ENCODE measurements at regions of chr15 and their contacts with region 1.

Region 1: DNA sequence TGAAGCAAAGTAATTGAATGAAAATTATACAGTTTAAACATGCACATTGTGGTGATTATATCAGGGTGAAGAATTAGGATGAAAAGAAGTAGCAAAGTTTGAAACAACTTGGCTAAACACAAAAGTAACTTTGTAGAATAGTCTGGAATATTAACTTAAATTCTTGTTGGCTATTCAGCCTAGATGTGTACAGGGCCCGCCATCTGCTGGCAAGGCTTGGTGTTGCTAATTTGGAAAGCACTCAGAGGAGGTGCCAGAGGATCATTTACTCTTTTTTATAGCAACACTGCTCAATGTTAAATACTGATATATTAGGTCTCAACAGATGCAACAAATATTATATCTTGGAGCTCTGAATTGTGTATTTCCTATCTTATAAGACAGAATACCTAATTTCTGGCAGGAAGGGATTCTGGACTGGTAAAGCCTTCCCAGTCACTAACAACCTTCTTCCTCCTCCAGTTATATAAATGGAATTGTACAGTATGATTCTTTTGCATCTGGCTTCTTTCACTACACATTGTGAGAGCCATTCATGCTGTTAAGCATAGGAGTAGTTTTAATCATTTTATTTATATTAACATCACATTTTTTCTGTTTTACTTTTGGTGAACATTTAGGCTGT is 36.1 kb downstream of the TTC23 start:
- DNase-seq: peak; percentile 90

Region 2: DNA sequence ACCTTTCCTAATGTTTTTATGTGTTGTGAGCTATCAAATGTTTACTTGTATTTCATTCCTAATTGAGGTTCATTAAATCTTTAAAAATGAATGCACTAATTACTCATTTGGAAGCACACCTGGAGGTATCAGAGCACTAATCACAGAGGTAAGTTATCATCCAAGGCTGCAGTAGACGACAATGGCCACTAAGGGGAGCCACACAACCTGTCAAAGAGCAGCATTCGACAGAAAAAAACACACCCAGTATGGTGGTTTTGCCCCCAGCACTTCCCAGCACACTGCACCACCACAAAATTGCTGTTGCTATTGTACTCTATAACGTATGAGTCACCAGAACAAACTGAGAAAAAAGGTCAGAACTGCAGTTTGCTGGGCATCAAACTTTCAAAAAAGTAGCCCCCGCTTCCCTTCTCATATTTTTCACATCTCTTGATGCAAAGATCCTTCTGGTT is 770.9 kb before region 1 on chr15:
- intact Hi-C with region 1: loop called (anchors 5 kb)
- DNase-seq: no peak

Region 3: GRCh38 chr15:98700519-98700918 is 512.8 kb before region 1 on chr15:
- intact Hi-C with region 1: no loop called
- DNase-seq: no peak

Region 4: DNA sequence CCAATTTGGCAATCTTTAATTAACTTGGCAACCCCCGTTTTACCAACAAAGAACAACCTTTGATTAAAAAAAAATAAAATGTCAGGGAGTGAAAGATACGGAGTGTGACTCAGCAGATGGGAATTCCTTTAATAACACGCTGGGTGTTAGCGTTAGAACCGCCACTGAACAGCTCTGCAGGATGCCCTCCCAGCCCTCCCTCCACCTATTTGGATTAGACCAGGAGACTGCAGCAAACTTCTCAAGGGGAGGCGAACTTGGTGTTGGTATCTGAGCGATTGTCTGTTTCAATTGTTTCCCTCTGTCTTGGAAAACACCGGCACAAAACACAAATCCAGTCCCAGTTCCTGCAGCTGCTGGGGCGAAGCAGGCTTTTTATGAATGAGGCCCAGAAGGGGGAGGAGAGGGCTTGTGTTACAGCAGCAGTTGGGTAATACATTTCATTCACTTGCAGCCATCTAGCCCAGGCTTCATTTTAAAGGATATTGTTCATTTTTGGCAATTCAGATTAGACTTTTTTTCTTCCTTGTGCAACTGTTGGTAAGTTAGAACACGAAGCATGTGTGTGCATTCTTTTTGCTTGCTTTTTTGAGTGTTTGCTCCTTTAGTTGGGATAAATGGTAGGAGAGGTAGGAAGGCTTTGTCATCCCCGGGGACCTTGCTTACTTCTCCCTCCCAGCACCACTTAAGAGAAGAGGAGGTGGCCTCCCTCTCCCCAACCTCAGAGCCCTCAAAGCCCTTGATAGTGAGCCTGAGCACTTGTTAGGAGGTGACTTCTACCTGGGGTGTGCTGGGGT is 412.7 kb before region 1 on chr15:
- intact Hi-C with region 1: no loop called
- DNase-seq: no peak

Region 5: GRCh38 chr15:99169769-99170311 is 43.5 kb before region 1 on chr15:
- intact Hi-C with region 1: loop called (anchors 2 kb)
- DNase-seq: no peak

Region 6: DNA sequence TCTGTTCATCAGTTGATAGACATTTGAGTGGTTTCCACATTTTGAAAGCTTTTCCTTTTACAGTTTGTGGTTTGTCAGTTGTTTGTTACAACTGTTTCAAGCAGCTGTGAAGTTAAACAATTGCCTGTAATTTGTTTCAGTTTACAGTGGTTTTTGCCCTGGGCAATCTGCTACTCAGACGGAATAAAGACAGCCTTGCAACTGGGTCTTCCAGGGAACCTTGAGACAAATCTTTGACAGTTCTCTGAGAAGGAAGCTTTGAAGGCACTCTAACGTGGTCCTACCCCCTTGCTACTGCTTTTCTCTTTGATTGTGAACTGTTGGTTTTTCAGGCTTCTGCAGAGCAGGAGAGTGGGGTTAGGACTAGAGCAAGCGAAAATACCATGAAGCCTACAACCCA is 66.0 kb after region 1 on chr15:
- intact Hi-C with region 1: no loop called
- DNase-seq: no peak

Region 7: GRCh38 chr15:99324082-99324620 is 110.9 kb after region 1 on chr15:
- intact Hi-C with region 1: no loop called
- DNase-seq: no peak